ENCODE measurements at regions of chr13 and their contacts with region 1.

Region 1: DNA sequence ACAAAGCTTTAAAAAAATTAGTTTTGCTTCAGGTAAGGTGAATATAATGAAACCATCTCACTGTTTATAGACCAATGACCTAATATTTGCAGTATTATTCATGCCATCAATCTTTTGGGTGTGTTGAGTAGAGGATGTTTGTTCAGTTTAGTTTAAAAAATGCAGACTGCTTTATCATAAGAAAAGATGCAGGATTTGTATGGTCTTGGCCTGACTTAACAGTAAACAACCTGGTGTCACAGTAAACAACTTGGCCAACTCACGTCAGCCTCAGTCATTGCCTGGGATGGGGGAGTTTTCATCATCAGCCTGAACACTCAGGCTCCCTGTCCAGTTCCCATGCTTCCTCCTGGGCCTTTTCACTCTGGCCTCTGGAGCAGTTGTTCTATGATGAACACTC is 55.1 kb downstream of the LMO7 start:
- DNase-seq: no peak

Region 2: DNA sequence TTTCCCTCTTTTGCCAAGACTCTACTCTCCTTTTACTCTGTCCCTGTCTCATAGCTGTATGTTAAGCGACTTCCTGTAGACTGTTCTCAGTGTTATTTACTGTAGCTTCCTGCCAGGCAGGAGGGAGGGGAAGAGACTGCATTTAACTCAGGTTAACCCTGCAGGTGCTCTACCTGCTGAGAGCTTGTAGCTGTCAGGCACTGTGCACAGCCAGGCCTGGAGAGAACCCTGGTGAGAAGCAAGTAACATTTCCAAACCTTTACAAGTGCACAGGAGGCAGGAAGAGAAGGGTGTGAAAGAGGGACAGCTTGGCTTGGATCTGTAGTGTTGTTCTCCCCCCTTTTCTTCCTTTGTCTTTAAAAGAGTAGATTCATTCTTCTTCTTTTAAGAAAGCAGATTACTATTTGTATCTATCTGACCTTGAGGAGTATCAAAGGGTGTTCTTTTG is 112.0 kb after region 1 on chr13:
- intact Hi-C with region 1: loop called in 1 of 2 experiments (anchors 10 kb)
- DNase-seq: no peak